ENCODE measurements at regions of chr1 and their contacts with region 1.

Region 1: GRCh38 chr1:234925440-234926263 is 203.0 kb downstream of the TOMM20 start:
- DNase-seq: peak in 4 of 14 experiments; percentile 48 to 67 (median 62)
- ATAC-seq: peak; percentile 58
- H3K4me3 ChIP-seq: peak overlapping the region; percentile 43
- H3K4me3 Mint-ChIP-seq: peak overlapping the region; percentile 42
- H3K27ac ChIP-seq: no peak overlapping the region
- H3K27ac Mint-ChIP-seq: peak overlapping the region; percentile 76
- H3K4me1 ChIP-seq: peaks cover 60% of the 10 kb centered on the region
- H3K4me1 Mint-ChIP-seq: peaks cover 55% of the 10 kb centered on the region
- H3K27me3 ChIP-seq: no peaks in the 10 kb centered on the region
- H3K27me3 Mint-ChIP-seq: no peaks in the 10 kb centered on the region
- CTCF ChIP-seq: no peak

Region 2: GRCh38 chr1:234842726-234843641 is 82.7 kb before region 1 on chr1:
- CTCF ChIA-PET with region 1: interaction called, 4 read pairs
- POLR2A ChIA-PET with region 1: interaction called, 4 read pairs
- intact Hi-C with region 1: loop called in 1 of 2 experiments (anchors 2 kb)
- DNase-seq: peak; percentile 20 to 82 (median 42)
- ATAC-seq: peak; percentile 31
- H3K4me3 ChIP-seq: peak overlapping the region; percentile 10
- H3K4me3 Mint-ChIP-seq: peak overlapping the region; percentile 9
- H3K27ac ChIP-seq: no peak overlapping the region
- H3K27ac Mint-ChIP-seq: peak overlapping the region; percentile 81
- H3K4me1 ChIP-seq: peaks cover 41% of the 10 kb centered on the region
- H3K4me1 Mint-ChIP-seq: peaks cover 78% of the 10 kb centered on the region
- H3K27me3 ChIP-seq: no peaks in the 10 kb centered on the region
- H3K27me3 Mint-ChIP-seq: no peaks in the 10 kb centered on the region
- CTCF ChIP-seq: no peak

Region 3: DNA sequence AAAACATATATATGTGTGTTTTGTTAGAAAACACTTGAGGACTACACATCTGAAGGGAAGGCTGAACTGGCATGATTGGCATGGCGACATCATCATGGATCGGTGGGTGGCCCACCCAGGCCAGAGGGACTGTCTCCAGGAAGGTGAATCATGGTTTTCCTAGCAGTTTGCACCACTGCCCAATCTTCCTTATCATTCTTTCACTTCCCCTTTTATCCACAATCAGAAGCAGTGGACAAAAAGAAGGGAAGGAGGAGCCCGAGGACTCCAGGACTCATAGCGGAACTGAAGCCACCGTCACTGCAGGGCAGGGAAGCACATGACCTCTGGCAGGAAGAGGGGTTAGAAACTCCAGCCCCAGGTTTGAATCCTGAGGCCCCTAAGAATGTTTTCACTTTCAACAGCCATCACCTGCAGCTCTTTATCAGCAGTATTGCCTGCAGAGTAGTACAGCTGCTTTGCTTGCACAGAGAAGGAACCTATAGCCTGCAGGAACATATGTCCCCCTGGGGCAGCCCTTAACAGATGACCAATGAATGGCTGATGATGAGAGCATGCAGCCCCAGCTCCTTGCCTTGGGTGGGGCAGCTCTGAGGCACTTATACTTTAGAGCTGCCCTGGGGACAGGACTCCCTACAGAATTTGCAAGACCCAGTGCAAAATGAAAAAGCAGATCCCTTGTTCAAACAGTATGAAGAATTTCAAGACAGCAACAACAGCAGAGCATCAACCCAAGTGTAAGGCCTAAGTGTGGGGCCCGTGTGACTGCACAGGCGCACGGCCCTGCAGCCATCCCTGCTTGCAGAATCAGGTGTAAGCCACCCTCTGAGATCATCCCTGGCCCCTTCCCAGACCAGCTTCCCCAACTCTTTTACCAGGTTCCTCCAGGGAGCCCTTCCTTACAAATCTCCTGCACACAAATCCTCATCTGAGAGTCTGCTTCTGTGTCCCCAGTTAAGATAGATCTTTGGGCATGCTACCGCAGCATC is 73.9 kb before region 1 on chr1:
- CTCF ChIA-PET with region 1: no interaction called
- POLR2A ChIA-PET with region 1: no interaction called
- intact Hi-C with region 1: loop called in 1 of 2 experiments (anchors 5 kb)
- DNase-seq: peak in 3 of 14 experiments; percentile 15 to 58 (median 56)
- ATAC-seq: no peak
- H3K4me3 ChIP-seq: no peak overlapping the region
- H3K4me3 Mint-ChIP-seq: no peak overlapping the region
- H3K27ac ChIP-seq: no peak overlapping the region
- H3K27ac Mint-ChIP-seq: no peak overlapping the region
- H3K4me1 ChIP-seq: peaks cover 24% of the 10 kb centered on the region
- H3K4me1 Mint-ChIP-seq: peaks cover 33% of the 10 kb centered on the region
- H3K27me3 ChIP-seq: no peaks in the 10 kb centered on the region
- H3K27me3 Mint-ChIP-seq: no peaks in the 10 kb centered on the region
- CTCF ChIP-seq: no peak

Region 4: GRCh38 chr1:236142253-236143103 is 1216.8 kb after region 1 on chr1 and contains the start of gene GPR137B:
- CTCF ChIA-PET with region 1: no interaction called
- POLR2A ChIA-PET with region 1: no interaction called
- intact Hi-C with region 1: no loop called
- DNase-seq: peak; percentile 19 to 74 (median 52)
- ATAC-seq: peak; percentile 75
- H3K4me3 ChIP-seq: peak within 1 kb of the TSS; percentile 80
- H3K4me3 Mint-ChIP-seq: peak within 1 kb of the TSS; percentile 100
- H3K27ac ChIP-seq: no peak within 1 kb of the TSS
- H3K27ac Mint-ChIP-seq: peak within 1 kb of the TSS; percentile 74
- H3K4me1 ChIP-seq: peaks cover 26% of the 10 kb centered on the region
- H3K4me1 Mint-ChIP-seq: peaks cover 36% of the 10 kb centered on the region
- H3K27me3 ChIP-seq: peaks cover 14 to 16% of the 10 kb centered on the region in 2 experiments
- H3K27me3 Mint-ChIP-seq: peaks cover 39% of the 10 kb centered on the region
- CTCF ChIP-seq: no peak
- total RNA-seq, gene GPR137B: 6.3 to 7.4 TPM